A549 (cell line): ENCODE measurements at regions of chr1 and their contacts with region 1.

Region 1: GRCh38 chr1:223811634-223812415 is 33.9 kb downstream of the TP53BP2 start:
- DNase-seq: peak in 1 of 2 experiments; percentile 51
- ATAC-seq: peak; percentile 79 to 83
- H3K4me3 ChIP-seq: no peak overlapping the region
- H3K27ac ChIP-seq: no peak overlapping the region
- H3K4me1 ChIP-seq: peaks cover 31% of the 10 kb centered on the region
- CTCF ChIP-seq: peak; percentile 78
- EP300 ChIP-seq: no peak
- POLR2A ChIP-seq: no peak
- RAD21 ChIP-seq: peak; percentile 85 to 88

Region 2: GRCh38 chr1:223724376-223724775 is 87.4 kb before region 1 on chr1:
- CTCF ChIA-PET with region 1: no interaction called
- POLR2A ChIA-PET with region 1: no interaction called
- DNase-seq: no peak
- ATAC-seq: no peak
- H3K4me3 ChIP-seq: no peak overlapping the region
- H3K27ac ChIP-seq: peak overlapping the region in 1 of 2 experiments; percentile 99; a peak in 3 of 6 replicates
- H3K4me1 ChIP-seq: peaks cover 90% of the 10 kb centered on the region
- CTCF ChIP-seq: no peak
- EP300 ChIP-seq: no peak
- POLR2A ChIP-seq: no peak
- RAD21 ChIP-seq: no peak

Region 3: DNA sequence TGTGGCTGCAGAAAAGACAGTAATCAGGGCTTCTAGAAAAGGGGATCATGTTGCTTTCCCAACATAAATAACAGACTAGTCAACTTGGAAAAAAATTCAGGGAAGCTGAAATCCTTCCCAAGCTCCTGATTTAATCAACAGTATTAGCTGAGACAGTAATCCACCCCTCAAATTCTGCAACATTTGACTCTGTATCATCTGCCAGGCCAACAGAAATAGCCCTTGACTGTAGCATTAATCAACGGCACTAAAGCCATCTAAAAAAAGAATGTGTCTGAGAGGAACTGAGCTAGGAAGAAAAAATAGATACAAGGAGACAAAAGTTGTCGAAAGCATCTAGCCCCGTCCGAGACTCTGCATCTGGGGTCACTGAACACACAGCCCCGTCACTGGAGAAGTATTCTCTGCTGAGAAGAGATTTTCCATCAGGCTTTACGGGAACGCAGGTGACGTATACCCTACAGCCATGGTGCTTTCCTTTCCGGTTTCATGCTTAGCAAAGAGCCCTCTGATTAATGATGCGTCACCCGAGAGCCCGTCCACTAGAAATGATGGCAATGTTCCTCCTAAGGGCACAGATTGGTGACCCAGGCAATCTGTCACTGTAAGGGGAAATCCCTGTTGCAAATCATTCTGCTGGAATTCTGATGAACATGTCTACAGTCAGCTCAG is 76.1 kb after region 1 on chr1:
- CTCF ChIA-PET with region 1: interaction called, 11 read pairs
- POLR2A ChIA-PET with region 1: no interaction called
- DNase-seq: peak; percentile 78 to 89
- ATAC-seq: peak; percentile 97 to 100
- H3K4me3 ChIP-seq: 0 out of 3 replicates have a peak overlapping the region, but pooled peaks have one; percentile 2
- H3K27ac ChIP-seq: peak overlapping the region; percentile 52 to 77
- H3K4me1 ChIP-seq: peaks cover 16% of the 10 kb centered on the region
- CTCF ChIP-seq: no peak
- EP300 ChIP-seq: no peak
- POLR2A ChIP-seq: no peak
- RAD21 ChIP-seq: no peak

Region 4: DNA sequence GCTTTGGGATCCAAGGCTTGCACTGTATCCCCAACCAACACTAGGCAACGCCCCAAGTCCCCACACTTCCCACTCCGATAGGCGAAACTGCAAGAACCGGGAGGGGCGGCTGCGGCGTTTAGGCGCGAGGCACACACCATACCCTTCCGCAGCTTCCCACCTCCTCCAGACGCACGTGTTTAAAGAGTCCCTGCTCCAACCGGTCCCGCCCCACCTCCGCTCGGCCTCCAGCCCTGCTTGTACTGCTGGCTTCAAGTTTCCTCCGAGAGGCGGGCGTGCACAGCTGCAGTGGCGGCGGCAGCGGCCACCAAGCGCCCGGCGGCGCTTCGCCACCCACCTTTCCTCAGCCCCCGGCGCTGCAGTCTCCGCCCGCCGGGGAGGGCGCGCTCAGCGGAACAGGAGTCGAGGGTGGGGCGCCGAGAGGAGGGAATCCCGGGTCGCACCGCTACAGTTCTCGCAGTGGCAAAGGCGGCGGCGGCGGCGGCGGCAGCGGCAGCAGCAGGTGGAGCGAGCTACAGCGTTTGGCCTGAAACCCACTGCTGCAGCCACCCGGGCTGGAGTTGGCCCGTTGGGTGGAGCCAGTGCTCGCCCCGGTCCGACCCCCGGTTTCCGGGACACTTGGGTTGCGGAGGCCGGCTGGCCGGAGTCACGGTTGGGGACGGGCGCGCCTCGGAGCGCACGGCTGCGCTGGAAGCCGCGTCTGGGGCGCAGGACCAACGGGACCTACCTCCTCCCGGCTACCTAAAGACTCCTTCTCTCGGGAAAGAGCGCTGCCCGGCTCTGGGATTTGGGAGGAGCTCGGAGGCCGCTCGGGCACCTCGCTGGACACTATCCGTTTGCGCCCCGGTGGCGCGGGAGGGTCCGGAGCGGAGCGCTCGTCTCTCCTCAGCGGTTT is 804.3 kb after region 1 on chr1 and contains the start of gene CNIH3:
- CTCF ChIA-PET with region 1: no interaction called
- POLR2A ChIA-PET with region 1: no interaction called
- DNase-seq: peak; percentile 43 to 56
- ATAC-seq: peak; percentile 72 to 78
- H3K4me3 ChIP-seq: peak within 1 kb of the TSS; percentile 44
- H3K27ac ChIP-seq: peak within 1 kb of the TSS in 1 of 2 experiments; percentile 49; a peak in 3 of 6 replicates
- H3K4me1 ChIP-seq: no peaks in the 10 kb centered on the region
- CTCF ChIP-seq: no peak
- EP300 ChIP-seq: no peak
- POLR2A ChIP-seq: no peak
- RAD21 ChIP-seq: no peak
- polyA plus RNA-seq, gene CNIH3: 0.52 and 0.85 TPM in 2 replicates